T-cell (primary cell): ENCODE measurements at regions of chr1 and their contacts with region 1.

Region 1: GRCh38 chr1:54359393-54360162 is 46.6 kb downstream of the SSBP3 start:
- DNase-seq: no peak
- ATAC-seq: no peak
- H3K4me3 ChIP-seq: no peak overlapping the region
- H3K4me3 Mint-ChIP-seq: no peak overlapping the region
- H3K27ac ChIP-seq: no peak overlapping the region
- H3K27ac Mint-ChIP-seq: peak overlapping the region; percentile 40 to 54
- H3K4me1 ChIP-seq: peaks cover 25 to 59% of the 10 kb centered on the region in 2 experiments
- H3K4me1 Mint-ChIP-seq: peaks cover 92 to 96% (median 92%) of the 10 kb centered on the region in 3 donors
- H3K27me3 ChIP-seq: no peaks in the 10 kb centered on the region
- H3K27me3 Mint-ChIP-seq: no peaks in the 10 kb centered on the region

Region 2: GRCh38 chr1:54323324-54323739 is 36.2 kb before region 1 on chr1:
- CTCF ChIA-PET with region 1: no interaction called
- POLR2A ChIA-PET with region 1: interaction called in 1 of 2 experiments, 10 read pairs
- DNase-seq: no peak
- ATAC-seq: no peak
- H3K4me3 ChIP-seq: no peak overlapping the region
- H3K4me3 Mint-ChIP-seq: no peak overlapping the region
- H3K27ac ChIP-seq: no peak overlapping the region
- H3K27ac Mint-ChIP-seq: peak overlapping the region in 1 of 2 donors; percentile 44
- H3K4me1 ChIP-seq: peaks cover 2 to 41% of the 10 kb centered on the region in 2 experiments
- H3K4me1 Mint-ChIP-seq: peaks cover 71 to 85% (median 72%) of the 10 kb centered on the region in 3 donors
- H3K27me3 ChIP-seq: no peaks in the 10 kb centered on the region
- H3K27me3 Mint-ChIP-seq: no peaks in the 10 kb centered on the region